ENCODE measurements at regions of chr1 and their contacts with region 1.

Region 1: DNA sequence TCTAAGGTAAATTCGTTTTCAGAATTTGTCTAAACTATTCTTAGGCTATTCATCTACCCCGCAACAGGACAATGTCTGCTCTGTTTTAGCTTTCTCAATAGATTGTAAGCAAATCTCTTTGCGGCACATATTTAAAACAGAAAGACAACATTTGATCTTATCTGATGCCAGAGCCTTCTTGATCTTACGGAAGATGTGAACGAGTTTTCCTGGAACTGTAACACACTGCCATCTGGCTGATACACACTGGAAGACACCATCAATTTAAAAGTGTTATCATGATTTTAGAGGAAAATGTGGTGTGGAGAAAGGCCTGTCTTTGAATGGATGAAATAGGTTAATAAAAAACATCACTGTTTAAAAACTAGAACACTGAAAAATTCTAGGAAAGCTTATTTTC is 36.1 kb downstream of the COA6 start:
- DNase-seq: no peak
- H3K4me3 Mint-ChIP-seq: peak overlapping the region; percentile 74
- H3K27ac Mint-ChIP-seq: peak overlapping the region; percentile 92
- H3K4me1 Mint-ChIP-seq: peaks cover 35% of the 10 kb centered on the region
- H3K27me3 Mint-ChIP-seq: no peaks in the 10 kb centered on the region

Region 2: GRCh38 chr1:234315091-234315541 is 94.2 kb before region 1 on chr1:
- intact Hi-C with region 1: loop called (anchors 2 kb)
- DNase-seq: no peak
- H3K4me3 Mint-ChIP-seq: no peak overlapping the region
- H3K27ac Mint-ChIP-seq: peak overlapping the region; percentile 46
- H3K4me1 Mint-ChIP-seq: peaks cover 38% of the 10 kb centered on the region
- H3K27me3 Mint-ChIP-seq: peaks cover 14% of the 10 kb centered on the region

Region 3: DNA sequence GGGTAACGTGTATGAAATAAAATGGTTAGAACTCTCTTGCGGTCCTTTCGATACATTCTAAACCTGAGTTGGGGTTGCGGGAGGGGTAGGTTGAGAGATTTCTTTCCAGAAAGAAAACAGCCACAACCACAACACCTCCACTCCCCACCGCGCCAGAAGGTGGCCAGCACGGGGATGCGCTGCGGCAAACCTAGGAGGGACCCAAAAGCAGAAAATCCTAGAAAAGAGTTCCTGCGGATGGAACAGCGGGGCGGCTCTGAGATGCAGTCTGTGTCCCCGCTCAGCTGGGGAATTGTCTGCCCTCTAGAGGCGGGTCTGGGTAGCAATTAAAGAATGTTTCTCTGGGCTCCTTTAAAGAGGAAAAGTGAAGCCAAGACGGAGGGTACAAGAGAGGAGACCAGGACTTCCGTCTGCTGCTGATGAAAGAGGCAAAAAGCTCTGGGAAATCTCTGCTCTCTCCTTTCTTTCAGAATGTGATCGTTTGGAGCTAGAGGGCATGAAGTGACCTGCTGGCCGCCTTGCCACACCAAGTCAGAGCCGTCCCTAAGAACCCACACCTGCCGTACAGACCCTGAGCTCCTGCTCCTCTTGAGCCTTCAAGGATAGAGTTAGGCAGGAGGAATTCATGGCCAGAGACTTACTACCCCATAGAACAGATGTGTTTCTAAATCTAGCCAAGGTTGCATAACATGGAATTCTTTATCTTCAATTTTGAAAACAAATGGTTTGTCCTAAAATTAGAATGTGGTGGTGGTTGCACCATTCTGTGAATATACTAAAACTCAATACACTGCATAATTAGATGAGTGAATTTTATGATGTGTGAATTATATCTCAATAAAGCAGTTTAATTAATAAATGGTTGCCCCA is 82.6 kb before region 1 on chr1:
- intact Hi-C with region 1: loop called (anchors 2 kb)
- DNase-seq: peak; percentile 56
- H3K4me3 Mint-ChIP-seq: peak overlapping the region; percentile 74
- H3K27ac Mint-ChIP-seq: peak overlapping the region; percentile 2
- H3K4me1 Mint-ChIP-seq: peaks cover 23% of the 10 kb centered on the region
- H3K27me3 Mint-ChIP-seq: peaks cover 29% of the 10 kb centered on the region

Region 4: GRCh38 chr1:234398849-234399381 is 10.4 kb before region 1 on chr1:
- intact Hi-C with region 1: loop called (anchors 1 kb)
- DNase-seq: no peak
- H3K4me3 Mint-ChIP-seq: peak overlapping the region; percentile 62
- H3K27ac Mint-ChIP-seq: peak overlapping the region; percentile 85
- H3K4me1 Mint-ChIP-seq: peaks cover 49% of the 10 kb centered on the region
- H3K27me3 Mint-ChIP-seq: no peaks in the 10 kb centered on the region

Region 5: GRCh38 chr1:234478481-234479309 is 69.4 kb after region 1 on chr1 and contains the start of gene TARBP1:
- intact Hi-C with region 1: loop called (anchors 5 kb)
- DNase-seq: peak; percentile 73
- H3K4me3 Mint-ChIP-seq: peak within 1 kb of the TSS; percentile 81
- H3K27ac Mint-ChIP-seq: peak within 1 kb of the TSS; percentile 60
- H3K4me1 Mint-ChIP-seq: peaks cover 47% of the 10 kb centered on the region
- H3K27me3 Mint-ChIP-seq: peaks cover 16% of the 10 kb centered on the region
- total RNA-seq, gene TARBP1: 79.7 and 87.5 TPM in 2 replicates